ENCODE measurements at regions of chr1 and their contacts with region 1.

Region 1: DNA sequence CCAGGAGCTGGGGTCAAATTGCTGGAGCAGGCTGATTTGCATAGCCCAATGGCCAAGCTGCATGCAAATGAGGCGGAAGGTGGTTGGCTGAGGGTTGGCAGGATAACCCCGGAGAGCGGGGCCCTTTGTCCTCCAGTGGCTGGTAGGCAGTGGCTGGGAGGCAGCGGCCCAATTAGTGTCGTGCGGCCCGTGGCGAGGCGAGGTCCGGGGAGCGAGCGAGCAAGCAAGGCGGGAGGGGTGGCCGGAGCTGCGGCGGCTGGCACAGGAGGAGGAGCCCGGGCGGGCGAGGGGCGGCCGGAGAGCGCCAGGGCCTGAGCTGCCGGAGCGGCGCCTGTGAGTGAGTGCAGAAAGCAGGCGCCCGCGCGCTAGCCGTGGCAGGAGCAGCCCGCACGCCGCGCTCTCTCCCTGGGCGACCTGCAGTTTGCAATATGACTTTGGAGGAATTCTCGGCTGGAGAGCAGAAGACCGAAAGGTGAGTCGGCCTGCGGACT is at the start of gene GADD45A:
- DNase-seq: peak; percentile 94 to 99 (median 97)

Region 2: DNA sequence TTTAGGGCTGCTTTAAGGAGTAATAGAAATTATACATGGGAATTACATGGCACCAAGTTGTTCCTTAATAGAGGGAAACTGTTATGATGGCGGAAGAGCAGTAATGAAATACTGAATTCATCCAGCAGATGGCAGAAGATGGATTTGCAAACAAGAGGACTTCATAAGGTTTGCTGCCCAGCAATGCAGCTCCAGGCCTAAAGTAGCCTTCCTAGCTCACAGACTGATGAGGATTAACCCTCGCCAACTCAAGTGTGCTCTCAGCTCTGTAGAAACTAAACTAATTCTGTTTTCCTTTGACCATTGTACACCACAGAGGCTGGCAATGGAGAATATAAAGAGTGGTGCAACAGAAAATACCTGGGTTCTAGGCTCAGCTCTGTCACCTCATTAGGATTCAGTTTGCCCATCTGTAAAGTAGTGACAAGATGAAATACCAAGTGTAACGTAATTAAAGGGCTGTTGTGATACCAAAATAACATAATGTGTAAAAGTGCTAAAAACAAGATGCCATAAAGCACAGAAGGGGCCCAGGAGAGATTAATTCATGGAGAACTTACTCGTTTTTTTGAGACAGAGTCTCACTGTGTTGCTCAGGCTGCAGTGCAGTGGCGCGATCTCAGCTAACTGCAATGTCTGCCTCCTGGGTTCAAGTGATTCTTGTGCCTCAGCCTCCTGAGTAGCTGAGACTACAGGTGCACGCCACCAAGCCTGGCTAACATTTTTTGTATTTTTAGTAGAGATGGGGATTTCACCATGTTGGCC is 152.5 kb before region 1 on chr1:
- intact Hi-C with region 1: loop called (anchors 5 kb)
- DNase-seq: peak in 5 of 10 donors; percentile 7 to 83 (median 28)

Region 3: GRCh38 chr1:68213843-68214242 is 528.7 kb after region 1 on chr1:
- intact Hi-C with region 1: no loop called
- DNase-seq: peak in 2 of 10 donors; percentile 11 to 78